Activated T-helper 1 cell treated with anti-CD3 and anti-CD28 coated beads, Interleukin-12 subunit alpha, Interleukin-12 subunit beta, Interleukin-2, Interleukin-4 antibody, amounts not matched to agents 30 ng/mL and 10 ng/mL and 1 ng/mL, durations not matched to agents 14 hours and 24 hours and 36 hours (primary cell): ENCODE measurements at regions of chr7 and their contacts with region 1.

Region 1: GRCh38 chr7:100396421-100396982 is 23.2 kb downstream of the PILRA start:
- DNase-seq: peak; percentile 53
- H3K4me3 Mint-ChIP-seq: peak overlapping the region; percentile 51
- H3K27ac Mint-ChIP-seq: peak overlapping the region; percentile 84
- H3K4me1 Mint-ChIP-seq: peaks cover 22% of the 10 kb centered on the region
- H3K27me3 Mint-ChIP-seq: peaks cover 51% of the 10 kb centered on the region

Region 2: DNA sequence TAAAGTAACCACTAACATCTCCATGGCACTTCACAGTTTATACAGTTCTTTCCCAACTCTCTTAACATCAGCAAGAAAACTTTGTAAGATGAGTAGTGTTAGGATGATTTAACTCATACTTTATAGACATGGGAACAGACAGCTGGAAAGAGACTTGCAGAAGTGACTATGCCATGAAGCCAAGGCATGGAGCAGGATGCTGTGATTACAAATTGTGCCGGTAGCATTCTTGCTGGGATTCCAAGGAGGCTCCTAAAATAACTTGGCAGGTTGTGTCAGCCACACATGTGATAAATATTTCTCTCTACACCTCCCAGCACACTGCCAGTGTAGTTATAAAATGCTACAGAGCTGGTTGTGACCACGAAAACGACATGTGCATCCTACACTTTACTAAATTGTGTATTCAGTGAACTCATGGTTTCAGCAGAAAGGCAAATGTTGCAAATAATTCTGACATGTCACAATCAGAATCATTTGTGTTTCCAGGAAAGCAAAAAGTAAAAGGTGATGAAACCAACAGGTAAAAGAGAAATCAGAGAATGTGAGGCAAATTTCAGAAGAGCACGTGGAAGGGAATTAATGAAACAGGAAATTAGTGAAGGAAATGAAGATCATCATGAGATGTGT is 606.9 kb before region 1 on chr7:
- intact Hi-C with region 1: loop called (anchors 5 kb)
- DNase-seq: no peak
- H3K4me3 Mint-ChIP-seq: no peak overlapping the region
- H3K27ac Mint-ChIP-seq: no peak overlapping the region
- H3K4me1 Mint-ChIP-seq: peaks cover 23% of the 10 kb centered on the region
- H3K27me3 Mint-ChIP-seq: no peaks in the 10 kb centered on the region

Region 3: DNA sequence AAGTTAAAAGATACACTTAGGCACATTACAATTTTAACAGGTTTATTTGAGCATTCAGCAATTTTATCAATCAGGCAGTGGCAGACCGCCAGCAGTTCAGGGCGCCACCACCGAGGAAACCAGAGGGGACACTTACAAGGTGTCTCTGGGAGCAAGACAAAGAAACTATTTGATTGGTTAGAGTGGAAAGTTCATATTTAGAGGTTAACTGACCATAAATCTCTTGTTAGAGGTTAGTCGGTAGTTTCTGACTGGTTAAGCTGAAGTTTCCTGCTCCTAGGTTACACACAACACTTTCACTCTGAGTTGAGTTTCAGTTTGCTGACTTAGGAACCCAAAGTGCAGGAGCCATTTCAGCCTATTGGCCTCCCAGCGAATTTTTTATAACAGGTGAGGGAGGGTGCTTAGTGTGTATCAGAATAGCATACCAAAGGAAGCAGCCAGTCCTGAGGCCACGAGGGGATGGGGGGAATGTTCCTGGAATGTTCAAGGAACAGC is 187.5 kb before region 1 on chr7:
- intact Hi-C with region 1: loop called (anchors 1 kb)
- DNase-seq: peak; percentile 48
- H3K4me3 Mint-ChIP-seq: peak overlapping the region; percentile 71
- H3K27ac Mint-ChIP-seq: peak overlapping the region; percentile 80
- H3K4me1 Mint-ChIP-seq: peaks cover 49% of the 10 kb centered on the region
- H3K27me3 Mint-ChIP-seq: no peaks in the 10 kb centered on the region

Region 4: DNA sequence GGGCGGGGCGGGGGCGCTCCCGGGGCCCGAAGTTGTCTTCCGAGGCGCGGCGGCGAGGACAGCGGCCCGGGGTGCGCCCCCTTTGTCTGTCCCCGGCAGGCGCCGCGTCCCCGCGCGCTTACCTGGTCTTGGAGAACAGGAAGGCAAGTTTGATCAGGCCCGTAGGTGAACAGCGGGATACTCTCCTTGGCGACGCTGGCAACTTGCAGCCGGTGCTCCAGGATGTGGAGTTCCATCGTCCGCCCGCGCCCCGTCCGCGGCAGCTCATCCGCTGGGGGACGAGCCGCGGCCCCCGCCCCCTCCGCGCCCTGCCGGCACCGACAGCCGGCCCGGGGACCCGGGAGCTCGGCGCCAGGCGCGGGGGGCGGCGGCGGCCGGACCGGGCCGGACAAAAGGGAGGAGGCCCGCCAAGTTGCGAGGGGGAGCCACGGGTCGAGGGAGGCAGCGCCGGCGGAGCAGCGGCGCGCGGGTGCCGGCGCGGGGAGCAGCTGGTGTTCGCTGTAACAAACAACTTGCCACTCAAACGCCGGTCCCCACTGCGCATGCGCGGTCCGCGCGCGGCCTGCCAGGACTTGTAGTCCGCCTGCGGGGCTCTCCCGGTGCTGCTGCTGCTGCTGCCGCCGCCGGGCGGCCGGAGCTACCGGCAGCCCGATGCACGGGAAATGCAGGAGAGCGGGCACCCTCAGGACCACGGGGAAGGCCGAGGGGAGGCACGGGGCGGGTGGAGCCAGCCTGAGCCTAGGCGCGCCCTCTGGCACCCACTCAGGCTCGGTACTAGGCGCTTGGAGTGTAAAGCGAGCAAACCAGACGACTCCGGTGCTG is 124.6 kb before region 1 on chr7:
- intact Hi-C with region 1: loop called (anchors 1 kb)
- DNase-seq: peak; percentile 98
- H3K4me3 Mint-ChIP-seq: peak overlapping the region; percentile 77
- H3K27ac Mint-ChIP-seq: peak overlapping the region; percentile 55
- H3K4me1 Mint-ChIP-seq: peaks cover 14% of the 10 kb centered on the region
- H3K27me3 Mint-ChIP-seq: peaks cover 2% of the 10 kb centered on the region

Region 5: GRCh38 chr7:100342765-100343164 is 53.7 kb before region 1 on chr7:
- intact Hi-C with region 1: loop called (anchors 2 kb)
- DNase-seq: no peak
- H3K4me3 Mint-ChIP-seq: no peak overlapping the region
- H3K27ac Mint-ChIP-seq: no peak overlapping the region
- H3K4me1 Mint-ChIP-seq: peaks cover 39% of the 10 kb centered on the region
- H3K27me3 Mint-ChIP-seq: no peaks in the 10 kb centered on the region

Region 6: DNA sequence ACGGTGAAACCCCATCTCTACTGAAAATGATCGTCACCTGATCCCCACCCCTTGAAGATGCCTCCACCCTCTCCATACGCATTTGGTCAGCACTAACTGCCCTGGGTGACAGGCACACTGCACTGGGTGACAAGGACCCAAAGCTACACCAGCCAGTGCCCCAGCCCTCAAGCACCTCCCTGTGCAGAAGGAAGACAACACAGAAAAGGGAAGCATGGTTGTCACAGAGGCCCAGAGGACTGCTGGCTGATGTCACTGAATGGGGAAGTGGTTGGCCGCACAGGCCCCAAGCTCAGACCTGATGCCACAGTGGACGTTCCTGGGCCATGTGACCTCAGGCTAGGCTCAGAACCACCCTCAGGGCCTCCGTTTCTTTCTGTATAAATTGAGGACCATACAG is 27.4 kb before region 1 on chr7:
- intact Hi-C with region 1: loop called (anchors 1 kb)
- DNase-seq: no peak
- H3K4me3 Mint-ChIP-seq: no peak overlapping the region
- H3K27ac Mint-ChIP-seq: peak overlapping the region; percentile 40
- H3K4me1 Mint-ChIP-seq: peaks cover 44% of the 10 kb centered on the region
- H3K27me3 Mint-ChIP-seq: no peaks in the 10 kb centered on the region

Region 7: GRCh38 chr7:100407285-100408180 is 11.0 kb after region 1 on chr7:
- intact Hi-C with region 1: loop called (anchors 1 kb)
- DNase-seq: peak; percentile 45
- H3K4me3 Mint-ChIP-seq: no peak overlapping the region
- H3K27ac Mint-ChIP-seq: no peak overlapping the region
- H3K4me1 Mint-ChIP-seq: no peaks in the 10 kb centered on the region
- H3K27me3 Mint-ChIP-seq: peaks cover 24% of the 10 kb centered on the region

Region 8: DNA sequence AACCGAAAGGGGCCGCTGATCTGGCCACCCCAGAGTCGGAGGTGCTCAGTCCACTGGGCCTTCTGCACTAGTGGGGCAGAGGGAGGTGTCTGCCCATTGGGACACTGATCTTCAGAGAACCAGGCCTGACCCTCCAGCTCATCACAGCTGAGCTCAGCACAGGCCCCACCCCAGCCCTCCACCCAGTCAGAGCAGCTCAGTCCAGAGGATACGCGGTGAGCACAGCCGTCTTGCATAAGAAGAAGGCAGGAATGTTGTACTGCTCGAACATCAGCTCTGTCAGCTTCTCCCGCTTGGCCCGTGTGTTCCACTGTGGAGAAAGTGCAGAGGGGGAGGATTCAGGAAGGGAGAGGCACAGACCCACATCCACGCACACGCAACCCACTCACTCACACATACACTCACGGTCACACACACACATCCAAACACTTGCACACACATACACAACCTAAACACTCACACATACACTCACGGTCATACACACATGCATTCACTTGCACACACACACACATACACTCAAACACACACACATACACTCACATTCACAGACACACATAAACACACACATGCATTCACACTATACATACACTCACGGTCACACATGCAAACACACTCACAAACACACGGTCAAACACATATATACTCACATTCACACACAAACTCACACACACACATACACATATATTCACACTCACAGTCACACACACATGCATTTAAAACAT is 253.5 kb after region 1 on chr7:
- intact Hi-C with region 1: no loop called
- DNase-seq: no peak
- H3K4me3 Mint-ChIP-seq: no peak overlapping the region
- H3K27ac Mint-ChIP-seq: no peak overlapping the region
- H3K4me1 Mint-ChIP-seq: no peaks in the 10 kb centered on the region
- H3K27me3 Mint-ChIP-seq: peaks cover 10% of the 10 kb centered on the region

Region 9: GRCh38 chr7:101151908-101152651 is 755.6 kb after region 1 on chr7:
- intact Hi-C with region 1: no loop called
- DNase-seq: no peak
- H3K4me3 Mint-ChIP-seq: no peak overlapping the region
- H3K27ac Mint-ChIP-seq: no peak overlapping the region
- H3K4me1 Mint-ChIP-seq: peaks cover 21% of the 10 kb centered on the region
- H3K27me3 Mint-ChIP-seq: peaks cover 20% of the 10 kb centered on the region